ENCODE measurements at regions of chr19 and their contacts with region 1.

Region 1: DNA sequence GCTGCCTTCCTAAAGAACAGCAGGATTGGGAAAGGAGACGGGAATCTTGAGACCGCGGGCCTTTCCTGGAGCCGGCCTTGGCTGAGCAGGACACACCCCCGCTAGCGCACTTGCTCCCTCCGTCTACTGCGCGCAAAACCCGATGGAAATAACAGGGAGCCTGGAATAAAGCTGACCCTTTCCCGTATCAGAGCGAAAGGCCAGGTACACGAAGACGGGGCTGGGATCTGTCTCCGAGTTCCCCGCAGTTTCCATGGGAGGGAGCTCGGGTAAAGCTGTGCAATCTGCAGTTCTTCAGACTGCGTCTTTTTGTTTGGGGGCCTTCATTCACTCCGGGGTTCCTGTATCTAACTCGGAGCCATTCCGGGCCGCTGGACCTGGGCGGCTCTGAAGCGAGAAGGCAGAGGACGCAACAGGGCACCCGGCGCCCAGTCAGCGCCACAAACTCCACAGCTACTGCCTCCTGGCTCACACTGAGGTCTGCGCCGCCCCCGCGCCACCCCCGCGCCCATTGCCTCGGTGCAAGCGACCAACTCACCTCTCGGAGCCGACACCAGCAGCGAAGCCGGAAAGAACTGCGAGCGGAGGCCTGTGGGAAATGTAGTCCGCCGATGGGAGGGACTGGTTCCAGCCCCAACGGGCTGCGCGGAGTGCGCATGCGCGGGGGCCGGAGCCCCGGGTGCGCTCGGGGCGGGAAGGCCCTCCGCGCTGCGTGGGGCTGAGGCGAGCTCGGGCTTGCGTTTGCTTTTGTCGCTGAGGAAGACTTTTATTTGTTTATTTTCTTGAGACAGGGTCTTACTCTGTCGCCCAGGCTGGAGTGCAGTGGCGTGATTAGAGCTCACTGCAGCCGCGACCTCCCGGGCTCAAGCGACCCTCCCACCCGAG is at the start of gene ZFP14:
- DNase-seq: peak; percentile 84 to 87
- ATAC-seq: peak; percentile 99
- H3K4me3 ChIP-seq: peak within 1 kb of the TSS; percentile 67 to 93 (median 84)
- H3K27ac ChIP-seq: peak within 1 kb of the TSS; percentile 72 to 84 (median 78)
- H3K4me1 ChIP-seq: peaks cover 11 to 17% of the 10 kb centered on the region in 2 donors
- H3K27me3 ChIP-seq: no peaks in the 10 kb centered on the region
- CTCF ChIP-seq: peak in 1 of 5 experiments; percentile 9
- POLR2A ChIP-seq: peak; percentile 39 to 53
- total RNA-seq, gene ZFP14: 0.67 to 1.9 (median 0.74) TPM

Region 2: DNA sequence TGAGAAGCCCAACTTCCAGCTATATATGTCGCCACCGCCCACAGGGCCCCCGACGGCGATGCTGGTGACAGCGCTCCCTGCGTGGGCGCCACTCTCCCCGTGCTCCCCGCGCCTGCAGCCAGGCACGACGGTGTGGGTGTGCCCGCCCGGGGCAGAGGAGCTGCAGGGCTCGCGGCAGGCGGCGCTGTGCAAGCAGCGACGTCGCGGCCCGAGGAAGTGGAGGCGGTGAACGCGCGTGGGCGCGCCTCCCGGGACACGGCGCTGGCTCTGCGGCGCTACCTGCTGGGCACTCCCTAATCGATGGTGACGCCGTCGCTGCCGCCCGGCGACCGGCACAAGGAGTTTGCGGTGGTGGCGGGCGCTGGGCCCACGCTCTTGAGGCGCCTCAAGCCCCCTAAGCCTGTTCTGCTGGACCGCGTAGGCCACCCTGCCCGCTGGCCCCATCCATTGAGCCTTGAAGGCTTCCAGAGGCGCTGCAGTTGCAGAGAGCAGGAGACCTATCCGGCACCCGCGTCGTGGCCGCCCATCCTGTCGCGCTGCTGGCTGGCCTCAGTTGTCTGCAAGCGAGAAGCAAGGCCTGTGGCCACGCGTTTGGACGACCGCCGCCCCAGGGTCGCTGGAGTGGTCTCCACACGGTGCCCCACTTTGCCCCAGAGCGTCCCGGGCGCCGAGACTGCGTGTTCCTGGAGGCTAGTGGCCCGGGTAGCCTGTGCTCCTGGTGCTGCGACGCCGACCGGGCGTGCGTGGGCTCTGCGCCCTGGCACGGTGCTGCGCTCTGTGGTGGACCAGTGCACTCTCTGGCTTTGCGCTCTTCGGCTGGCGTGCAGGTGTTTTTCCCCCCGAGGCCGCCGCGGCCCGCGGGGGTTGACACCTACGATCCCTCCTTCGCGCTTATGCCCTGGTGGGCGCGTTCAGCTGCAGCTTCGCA is 419.6 kb before region 1 on chr19:
- in situ Hi-C with region 1: no loop called
- intact Hi-C with region 1: no loop called
- DNase-seq: no peak
- ATAC-seq: no peak
- H3K4me3 ChIP-seq: no peak overlapping the region
- H3K27ac ChIP-seq: no peak overlapping the region
- H3K4me1 ChIP-seq: no peaks in the 10 kb centered on the region
- H3K27me3 ChIP-seq: peaks cover 34 to 39% (median 38%) of the 10 kb centered on the region in 3 donors
- CTCF ChIP-seq: no peak
- POLR2A ChIP-seq: no peak

Region 3: DNA sequence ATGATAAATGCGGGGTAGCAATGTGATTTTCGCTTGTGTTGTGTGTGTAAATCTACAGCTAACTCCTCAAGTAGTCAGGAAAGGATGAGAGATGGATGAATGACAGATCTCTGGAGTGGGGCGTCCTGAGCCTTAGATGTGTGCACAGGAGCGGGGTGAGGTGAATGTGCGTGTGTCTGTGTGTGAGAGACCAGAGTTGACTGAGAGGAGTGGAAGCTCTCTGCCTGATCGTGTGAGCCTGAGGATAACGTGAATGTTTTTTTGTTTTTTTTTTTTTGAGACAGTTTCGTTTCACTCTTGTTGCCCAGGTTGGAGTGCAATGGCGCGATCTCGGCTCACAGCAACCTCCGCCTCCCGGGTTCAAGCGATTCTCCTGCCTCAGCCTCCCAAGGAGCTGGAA is 287.0 kb after region 1 on chr19:
- in situ Hi-C with region 1: no loop called
- intact Hi-C with region 1: loop called (anchors 5 kb)
- DNase-seq: no peak
- ATAC-seq: no peak
- H3K4me3 ChIP-seq: peak overlapping the region; percentile 82 to 97 (median 92)
- H3K27ac ChIP-seq: no peak overlapping the region
- H3K4me1 ChIP-seq: peaks cover 6 to 9% of the 10 kb centered on the region in 2 donors
- H3K27me3 ChIP-seq: no peaks in the 10 kb centered on the region
- CTCF ChIP-seq: no peak
- POLR2A ChIP-seq: no peak

Measured in gastrocnemius medialis (tissue), 4 donors.